ENCODE measurements at regions of chr19 and their contacts with region 1.

Region 1: DNA sequence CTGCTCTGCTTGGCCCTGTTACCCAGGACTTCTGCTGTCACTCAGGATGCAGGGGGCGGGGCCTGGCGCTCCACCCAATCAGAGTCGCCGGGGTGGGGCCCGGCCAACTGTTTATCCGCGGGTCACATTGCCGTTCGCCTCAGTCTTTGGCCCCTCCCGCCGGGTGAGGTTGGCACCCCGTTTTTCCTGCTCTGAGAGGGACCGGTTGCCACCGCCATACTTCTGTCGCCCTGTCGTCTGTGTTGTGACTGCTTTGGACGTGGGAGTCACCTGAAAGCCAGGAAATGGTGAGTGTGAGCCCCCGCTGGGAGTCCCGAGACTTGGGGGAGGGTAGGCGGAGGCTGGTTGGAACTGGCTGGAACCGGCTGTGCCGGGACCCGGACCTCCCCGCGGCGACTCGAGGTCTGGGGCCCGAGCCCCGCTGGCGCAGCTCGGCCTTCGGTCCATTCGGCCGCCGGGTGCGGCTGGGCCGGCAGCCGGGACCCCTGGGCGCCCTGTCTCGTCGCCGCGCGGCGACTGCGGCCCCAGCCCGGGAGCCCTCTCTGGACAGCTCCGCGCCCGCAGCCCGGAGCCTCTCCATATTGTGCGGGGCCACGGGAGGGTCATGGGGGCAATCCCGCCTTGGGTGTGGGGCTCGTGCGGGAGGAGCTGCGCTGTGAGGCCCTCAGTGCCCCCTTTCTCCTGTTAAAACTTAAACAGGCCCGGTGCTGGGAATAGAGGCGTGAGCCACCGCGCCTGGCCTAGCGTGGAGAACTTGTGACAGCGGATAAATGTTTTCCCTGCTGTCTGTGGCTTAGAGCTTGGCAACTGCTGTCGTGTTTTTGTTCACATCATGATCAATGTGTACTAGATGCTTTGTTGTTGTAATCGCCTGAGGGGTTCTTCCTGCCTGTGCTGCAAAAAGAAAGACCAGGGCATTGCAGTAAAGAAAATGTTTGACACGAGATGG is at the start of gene ZNF844:
- DNase-seq: peak; percentile 98
- ATAC-seq: peak; percentile 94
- H3K4me3 Mint-ChIP-seq: peak within 1 kb of the TSS; percentile 87
- H3K27ac Mint-ChIP-seq: peak within 1 kb of the TSS; percentile 97
- H3K4me1 Mint-ChIP-seq: peaks cover 12% of the 10 kb centered on the region
- H3K27me3 Mint-ChIP-seq: no peaks in the 10 kb centered on the region
- CTCF ChIP-seq: no peak
- total RNA-seq, gene ZNF844: 9.1 to 10.5 TPM (median 9.4 TPM) in 3 replicates

Region 2: GRCh38 chr19:11987405-11988281 is 77.2 kb before region 1 on chr19:
- CTCF ChIA-PET with region 1: interaction called, 24 read pairs
- POLR2A ChIA-PET with region 1: interaction called, 7 read pairs
- DNase-seq: peak; percentile 98
- ATAC-seq: peak; percentile 97
- H3K4me3 Mint-ChIP-seq: peak overlapping the region; percentile 98
- H3K27ac Mint-ChIP-seq: peak overlapping the region; percentile 99
- H3K4me1 Mint-ChIP-seq: peaks cover 31% of the 10 kb centered on the region
- H3K27me3 Mint-ChIP-seq: no peaks in the 10 kb centered on the region
- CTCF ChIP-seq: no peak

Region 3: GRCh38 chr19:12035220-12036153 is 29.4 kb before region 1 on chr19 and contains the start of gene ZNF433:
- CTCF ChIA-PET with region 1: interaction called, 25 read pairs
- POLR2A ChIA-PET with region 1: interaction called, 3 read pairs
- DNase-seq: peak; percentile 99
- ATAC-seq: peak; percentile 98
- H3K4me3 Mint-ChIP-seq: peak within 1 kb of the TSS; percentile 83
- H3K27ac Mint-ChIP-seq: peak within 1 kb of the TSS; percentile 93
- H3K4me1 Mint-ChIP-seq: peaks cover 26% of the 10 kb centered on the region
- H3K27me3 Mint-ChIP-seq: peaks cover 32% of the 10 kb centered on the region
- CTCF ChIP-seq: no peak
- total RNA-seq, gene ZNF433: 2.9 TPM in 3 replicates

Region 4: GRCh38 chr19:12052497-12053169 is 12.2 kb before region 1 on chr19 and contains the start of gene ZNF878:
- CTCF ChIA-PET with region 1: interaction called, 9 read pairs
- POLR2A ChIA-PET with region 1: interaction called, 14 read pairs
- DNase-seq: peak; percentile 99
- ATAC-seq: peak; percentile 98
- H3K4me3 Mint-ChIP-seq: peak within 1 kb of the TSS; percentile 91
- H3K27ac Mint-ChIP-seq: peak within 1 kb of the TSS; percentile 98
- H3K4me1 Mint-ChIP-seq: peaks cover 18% of the 10 kb centered on the region
- H3K27me3 Mint-ChIP-seq: peaks cover 2% of the 10 kb centered on the region; the same call in 1 of the 2 replicates
- CTCF ChIP-seq: no peak
- total RNA-seq, gene ZNF878: 10.1 to 12.5 TPM (median 10.7 TPM) in 3 replicates

Region 5: DNA sequence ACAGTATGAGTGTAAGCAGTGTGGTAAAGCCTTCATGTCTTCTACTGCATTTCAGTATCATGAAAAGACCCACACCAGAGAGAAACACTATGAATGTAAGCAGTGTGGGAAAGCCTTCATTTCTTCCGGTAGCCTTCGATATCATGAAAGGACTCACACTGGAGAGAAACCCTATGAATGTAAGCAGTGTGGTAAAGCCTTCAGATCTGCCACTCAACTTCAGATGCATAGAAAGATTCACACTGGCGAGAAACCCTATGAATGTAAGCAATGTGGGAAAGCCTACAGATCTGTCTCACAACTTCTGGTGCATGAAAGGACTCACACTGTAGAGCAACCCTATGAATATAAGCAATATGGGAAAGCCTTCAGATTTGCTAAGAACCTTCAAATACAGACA is 12.5 kb after region 1 on chr19:
- CTCF ChIA-PET with region 1: no interaction called
- POLR2A ChIA-PET with region 1: no interaction called
- DNase-seq: no peak
- ATAC-seq: no peak
- H3K4me3 Mint-ChIP-seq: no peak overlapping the region
- H3K27ac Mint-ChIP-seq: no peak overlapping the region
- H3K4me1 Mint-ChIP-seq: no peaks in the 10 kb centered on the region
- H3K27me3 Mint-ChIP-seq: peaks cover 29% of the 10 kb centered on the region
- CTCF ChIP-seq: no peak

Region 6: GRCh38 chr19:12126707-12127106 is 61.8 kb after region 1 on chr19:
- CTCF ChIA-PET with region 1: interaction called, 16 read pairs
- POLR2A ChIA-PET with region 1: interaction called, 5 read pairs
- DNase-seq: peak; percentile 22
- ATAC-seq: peak; percentile 53
- H3K4me3 Mint-ChIP-seq: no peak overlapping the region
- H3K27ac Mint-ChIP-seq: 0 out of 2 replicates have a peak overlapping the region, but pooled peaks have one; percentile 37
- H3K4me1 Mint-ChIP-seq: 0 out of 2 replicates have a peak, but pooled peaks cover 4% of the 10 kb centered on the region
- H3K27me3 Mint-ChIP-seq: no peaks in the 10 kb centered on the region; the same call in 1 of the 2 replicates
- CTCF ChIP-seq: peak; percentile 39; the same call in 1 of the 2 replicates

Region 7: GRCh38 chr19:12156223-12157058 is 91.6 kb after region 1 on chr19 and contains the start of gene ZNF625:
- CTCF ChIA-PET with region 1: interaction called, 17 read pairs
- POLR2A ChIA-PET with region 1: interaction called, 3 read pairs
- DNase-seq: peak; percentile 97
- ATAC-seq: peak; percentile 97
- H3K4me3 Mint-ChIP-seq: peak within 1 kb of the TSS; percentile 91
- H3K27ac Mint-ChIP-seq: peak within 1 kb of the TSS; percentile 95
- H3K4me1 Mint-ChIP-seq: peaks cover 12% of the 10 kb centered on the region
- H3K27me3 Mint-ChIP-seq: peaks cover 5% of the 10 kb centered on the region
- CTCF ChIP-seq: no peak
- total RNA-seq, gene ZNF625: 23.9 to 26.0 TPM (median 24.5 TPM) in 3 replicates